PC-3 (cell line): ENCODE measurements at regions of chr14 and their contacts with region 1.

Region 1: GRCh38 chr14:99982537-99983250 is 82.5 kb upstream of the EVL start:
- DNase-seq: peak; percentile 71
- ATAC-seq: peak; percentile 74
- H3K4me3 ChIP-seq: no peak overlapping the region
- H3K27ac ChIP-seq: no peak overlapping the region
- H3K4me1 ChIP-seq: peaks cover 14% of the 10 kb centered on the region
- H3K27me3 ChIP-seq: no peaks in the 10 kb centered on the region
- CTCF ChIP-seq: peak; percentile 90

Region 2: GRCh38 chr14:100031536-100032281 is 49.0 kb after region 1 on chr14:
- CTCF ChIA-PET with region 1: interaction called, 4 read pairs
- POLR2A ChIA-PET with region 1: no interaction called
- intact Hi-C with region 1: loop called (anchors 2 kb)
- DNase-seq: peak; percentile 98
- ATAC-seq: peak; percentile 87
- H3K4me3 ChIP-seq: peak overlapping the region; percentile 71
- H3K27ac ChIP-seq: peak overlapping the region; percentile 94
- H3K4me1 ChIP-seq: peaks cover 48% of the 10 kb centered on the region
- H3K27me3 ChIP-seq: no peaks in the 10 kb centered on the region
- CTCF ChIP-seq: peak; percentile 46

Region 3: DNA sequence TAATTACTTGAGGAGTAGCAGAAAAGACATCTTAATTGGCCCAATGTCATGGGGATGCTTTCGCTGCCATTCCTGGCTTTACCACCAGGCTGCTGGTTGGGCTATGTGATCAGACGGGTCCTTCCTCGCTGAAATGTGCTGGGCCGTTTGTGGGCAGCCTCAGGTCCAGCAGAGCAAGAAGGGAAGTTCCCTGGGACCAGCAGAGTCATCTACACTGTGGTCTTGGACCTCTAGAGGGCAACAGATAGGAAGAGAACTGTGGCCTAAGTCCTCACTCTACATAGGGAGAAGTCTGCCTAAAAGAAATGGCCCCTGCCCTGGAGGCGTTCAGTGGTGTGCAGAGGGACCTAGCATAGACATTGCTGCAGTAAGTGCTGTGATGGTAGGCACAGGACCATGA is 93.4 kb after region 1 on chr14:
- CTCF ChIA-PET with region 1: no interaction called
- POLR2A ChIA-PET with region 1: no interaction called
- intact Hi-C with region 1: loop called (anchors 1 kb)
- DNase-seq: peak; percentile 34
- ATAC-seq: peak; percentile 61
- H3K4me3 ChIP-seq: no peak overlapping the region
- H3K27ac ChIP-seq: no peak overlapping the region
- H3K4me1 ChIP-seq: peaks cover 15% of the 10 kb centered on the region
- H3K27me3 ChIP-seq: no peaks in the 10 kb centered on the region
- CTCF ChIP-seq: peak; percentile 40; the same call in 1 of the 2 replicates

Region 4: GRCh38 chr14:100192672-100193416 is 210.2 kb after region 1 on chr14:
- CTCF ChIA-PET with region 1: no interaction called
- POLR2A ChIA-PET with region 1: no interaction called
- intact Hi-C with region 1: loop called (anchors 2 kb)
- DNase-seq: peak; percentile 99
- ATAC-seq: peak; percentile 99
- H3K4me3 ChIP-seq: peak overlapping the region; percentile 66
- H3K27ac ChIP-seq: peak overlapping the region; percentile 38
- H3K4me1 ChIP-seq: peaks cover 12% of the 10 kb centered on the region
- H3K27me3 ChIP-seq: no peaks in the 10 kb centered on the region
- CTCF ChIP-seq: peak; percentile 76